ENCODE measurements at regions of chr19 and their contacts with region 1.

Region 1: GRCh38 chr19:13986348-13986904 is 19.7 kb downstream of the RFX1 start:
- DNase-seq: peak; percentile 97 to 100 (median 99)
- H3K4me3 ChIP-seq: peak overlapping the region; percentile 59
- H3K4me3 Mint-ChIP-seq: peak overlapping the region; percentile 22 to 85 (median 69)
- H3K27ac ChIP-seq: peak overlapping the region; percentile 93
- H3K27ac Mint-ChIP-seq: peak overlapping the region; percentile 95 to 100 (median 98)
- H3K4me1 ChIP-seq: peaks cover 82% of the 10 kb centered on the region
- H3K4me1 Mint-ChIP-seq: peaks cover 51 to 93% (median 59%) of the 10 kb centered on the region in 3 donors
- H3K27me3 ChIP-seq: no peaks in the 10 kb centered on the region
- H3K27me3 Mint-ChIP-seq: peaks cover 0 to 2% of the 10 kb centered on the region in 2 donors

Region 2: DNA sequence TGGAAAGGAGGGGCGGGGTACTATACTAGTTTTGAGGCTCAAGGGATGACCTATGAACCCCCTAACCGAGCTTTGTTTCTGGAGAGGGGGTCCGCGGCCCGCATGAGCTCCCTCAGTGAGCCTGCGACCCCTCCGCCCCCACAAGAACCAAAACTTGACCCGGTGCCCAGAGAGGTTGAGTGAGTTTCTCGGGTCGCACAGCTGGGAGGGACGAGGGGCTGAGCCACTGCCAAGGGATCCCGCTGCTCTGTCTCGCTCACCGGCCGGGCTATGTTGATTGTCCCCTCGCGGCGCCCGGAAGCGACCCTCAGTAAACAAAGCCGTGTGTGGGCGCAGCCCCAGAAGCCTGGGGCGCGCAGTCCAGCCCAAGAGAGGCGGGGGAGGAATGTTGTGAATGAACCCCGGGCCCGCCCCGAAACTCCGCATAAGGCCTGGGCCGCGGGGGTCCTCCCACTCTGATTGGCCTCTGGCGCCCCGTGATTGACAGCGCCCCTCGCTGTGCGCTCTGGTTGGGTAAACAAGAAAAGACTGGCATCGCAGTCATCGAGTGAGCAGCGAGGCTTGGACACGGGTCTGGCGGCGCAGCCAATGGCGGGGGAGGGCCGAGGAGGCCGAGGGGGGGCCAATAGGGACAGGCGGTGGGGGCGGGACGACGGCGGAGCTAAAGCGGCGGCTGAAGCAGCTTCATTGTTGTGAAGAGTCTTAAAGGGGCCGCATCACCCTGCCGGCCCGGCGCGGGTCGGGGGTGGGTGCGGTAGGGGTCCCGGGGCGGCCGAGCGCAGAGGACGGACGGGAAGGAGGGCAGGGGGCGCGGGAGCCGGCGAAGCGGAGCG is 191.5 kb before region 1 on chr19 and contains the start of gene ZSWIM4:
- CTCF ChIA-PET with region 1: no interaction called
- POLR2A ChIA-PET with region 1: no interaction called
- DNase-seq: peak; percentile 86 to 95 (median 88)
- H3K4me3 ChIP-seq: peak within 1 kb of the TSS; percentile 62
- H3K4me3 Mint-ChIP-seq: peak within 1 kb of the TSS; percentile 93 to 98 (median 96)
- H3K27ac ChIP-seq: peak within 1 kb of the TSS; percentile 73
- H3K27ac Mint-ChIP-seq: peak within 1 kb of the TSS; percentile 94 to 97 (median 95)
- H3K4me1 ChIP-seq: peaks cover 23% of the 10 kb centered on the region
- H3K4me1 Mint-ChIP-seq: peaks cover 28 to 46% (median 31%) of the 10 kb centered on the region in 3 donors
- H3K27me3 ChIP-seq: no peaks in the 10 kb centered on the region
- H3K27me3 Mint-ChIP-seq: peaks cover 0 to 2% of the 10 kb centered on the region in 2 donors
- total RNA-seq, gene ZSWIM4: 4.4 to 4.8 TPM

Region 3: DNA sequence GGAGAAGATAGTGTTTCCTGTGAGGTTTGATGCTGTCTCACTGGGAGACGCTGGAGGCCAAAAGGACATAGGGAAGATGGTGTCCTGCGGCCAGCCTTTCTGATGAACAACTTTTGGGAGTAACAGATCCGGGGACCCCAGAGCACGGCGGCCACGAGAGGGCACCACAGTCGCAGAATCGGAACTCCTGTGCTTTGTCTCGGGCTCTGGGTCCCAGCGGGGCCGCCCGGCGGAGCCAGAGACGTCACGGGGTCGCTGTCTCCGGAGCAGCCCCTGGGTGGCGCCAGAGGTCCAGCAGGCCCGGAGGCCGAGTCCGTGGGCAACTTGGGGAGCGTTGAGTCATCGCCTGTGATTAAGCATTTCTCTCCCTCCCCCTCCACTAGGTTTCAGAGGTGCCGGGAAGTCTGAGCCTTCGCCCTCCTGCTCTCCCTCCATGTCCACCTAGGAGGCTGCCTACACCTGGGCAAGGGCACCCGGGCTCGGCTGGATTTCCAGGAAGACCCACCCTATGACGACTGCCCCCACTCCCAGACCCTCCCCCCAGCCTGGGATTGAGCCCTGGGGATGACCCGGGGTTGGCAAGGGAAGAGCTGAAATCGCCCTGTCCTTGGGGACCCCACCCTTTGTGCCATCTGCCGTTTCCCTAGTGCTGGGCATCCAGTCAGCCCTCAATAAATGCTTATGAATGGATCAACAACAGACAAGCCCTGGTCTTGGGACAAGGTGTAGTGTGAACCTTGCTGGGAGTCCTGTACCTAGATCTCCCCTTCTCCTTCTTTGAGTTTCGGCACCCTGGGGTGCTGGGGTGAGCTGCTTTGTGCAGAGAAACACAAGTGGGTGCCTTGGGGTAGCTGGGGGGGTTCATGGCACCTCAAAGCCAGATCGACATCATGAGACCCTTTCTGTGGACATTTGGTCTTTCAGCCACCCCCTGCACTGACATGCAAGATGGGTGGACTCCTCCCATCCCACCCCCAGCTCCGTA is 106.1 kb before region 1 on chr19:
- CTCF ChIA-PET with region 1: no interaction called
- POLR2A ChIA-PET with region 1: interaction called, 13 read pairs
- DNase-seq: peak; percentile 93 to 99 (median 98)
- H3K4me3 ChIP-seq: peak overlapping the region; percentile 52
- H3K4me3 Mint-ChIP-seq: peak overlapping the region; percentile 54 to 83 (median 72)
- H3K27ac ChIP-seq: peak overlapping the region; percentile 74
- H3K27ac Mint-ChIP-seq: peak overlapping the region in 7 of 8 donors; percentile 88 to 92 (median 91)
- H3K4me1 ChIP-seq: peaks cover 48% of the 10 kb centered on the region
- H3K4me1 Mint-ChIP-seq: peaks cover 33 to 49% (median 37%) of the 10 kb centered on the region in 3 donors
- H3K27me3 ChIP-seq: no peaks in the 10 kb centered on the region
- H3K27me3 Mint-ChIP-seq: no peaks in the 10 kb centered on the region

Region 4: DNA sequence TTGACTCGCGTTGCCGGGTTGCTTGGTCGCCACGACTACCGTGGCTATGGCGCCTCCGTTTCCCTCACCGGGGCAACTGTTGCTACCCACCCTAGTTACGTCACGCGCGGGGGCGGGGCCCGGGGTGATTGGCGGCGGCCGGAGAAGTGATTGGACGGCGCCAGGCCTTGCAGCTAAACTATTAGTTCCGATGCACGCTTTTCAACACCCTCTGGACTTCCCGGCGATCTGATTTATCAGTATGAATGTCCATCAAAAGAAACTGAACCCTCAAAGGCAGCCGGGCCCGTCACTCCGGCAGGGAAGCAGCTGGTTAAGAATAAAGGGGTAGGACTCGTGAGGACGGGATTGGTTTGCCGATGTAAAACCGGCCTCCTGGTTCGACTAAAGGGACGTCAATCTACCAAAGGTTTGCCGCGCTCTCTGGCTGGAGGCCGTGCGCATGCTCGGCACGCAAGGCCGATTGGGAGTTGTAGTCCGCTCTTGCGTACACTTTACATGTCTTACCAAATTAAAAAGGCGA is 19.9 kb after region 1 on chr19 and contains the start of gene RFX1:
- CTCF ChIA-PET with region 1: interaction called, 5 read pairs
- POLR2A ChIA-PET with region 1: interaction called, 11 read pairs
- DNase-seq: peak; percentile 100
- H3K4me3 ChIP-seq: peak within 1 kb of the TSS; percentile 91
- H3K4me3 Mint-ChIP-seq: peak within 1 kb of the TSS; percentile 90 to 98 (median 96)
- H3K27ac ChIP-seq: peak within 1 kb of the TSS; percentile 100
- H3K27ac Mint-ChIP-seq: peak within 1 kb of the TSS; percentile 96 to 100 (median 100)
- H3K4me1 ChIP-seq: peaks cover 35% of the 10 kb centered on the region
- H3K4me1 Mint-ChIP-seq: peaks cover 34 to 44% (median 34%) of the 10 kb centered on the region in 3 donors
- H3K27me3 ChIP-seq: no peaks in the 10 kb centered on the region
- H3K27me3 Mint-ChIP-seq: peaks cover 0 to 3% of the 10 kb centered on the region in 2 donors
- total RNA-seq, gene RFX1: 13.0 to 13.6 TPM

Region 5: GRCh38 chr19:14031719-14032480 is 45.5 kb after region 1 on chr19 and contains the start of gene IL27RA:
- CTCF ChIA-PET with region 1: interaction called, 6 read pairs
- POLR2A ChIA-PET with region 1: interaction called, 11 read pairs
- DNase-seq: peak; percentile 70 to 92 (median 83)
- H3K4me3 ChIP-seq: peak within 1 kb of the TSS; percentile 69
- H3K4me3 Mint-ChIP-seq: peak within 1 kb of the TSS; percentile 86 to 99 (median 94)
- H3K27ac ChIP-seq: peak within 1 kb of the TSS; percentile 97
- H3K27ac Mint-ChIP-seq: peak within 1 kb of the TSS; percentile 86 to 99 (median 98)
- H3K4me1 ChIP-seq: peaks cover 24% of the 10 kb centered on the region
- H3K4me1 Mint-ChIP-seq: peaks cover 23 to 43% (median 37%) of the 10 kb centered on the region in 3 donors
- H3K27me3 ChIP-seq: no peaks in the 10 kb centered on the region
- H3K27me3 Mint-ChIP-seq: no peaks in the 10 kb centered on the region
- total RNA-seq, gene IL27RA: 71.4 to 73.6 TPM